B cell (primary cell): ENCODE measurements at regions of chr9 and their contacts with region 1.

Region 1: GRCh38 chr9:83691492-83691891 is 16.3 kb downstream of the UBQLN1 start:
- DNase-seq: no peak
- ATAC-seq: no peak
- H3K4me3 ChIP-seq: no peak overlapping the region
- H3K4me3 Mint-ChIP-seq: no peak overlapping the region
- H3K27ac ChIP-seq: no peak overlapping the region
- H3K27ac Mint-ChIP-seq: no peak overlapping the region
- H3K4me1 ChIP-seq: peaks cover 19 to 45% of the 10 kb centered on the region in 2 donors
- H3K4me1 Mint-ChIP-seq: peaks cover 78% of the 10 kb centered on the region
- H3K27me3 ChIP-seq: no peaks in the 10 kb centered on the region
- H3K27me3 Mint-ChIP-seq: no peaks in the 10 kb centered on the region
- CTCF ChIP-seq: no peak

Region 2: GRCh38 chr9:83656032-83656680 is 35.3 kb before region 1 on chr9:
- CTCF ChIA-PET with region 1: no interaction called
- POLR2A ChIA-PET with region 1: no interaction called
- intact Hi-C with region 1: loop called (anchors 5 kb)
- DNase-seq: no peak
- ATAC-seq: no peak
- H3K4me3 ChIP-seq: no peak overlapping the region
- H3K4me3 Mint-ChIP-seq: no peak overlapping the region
- H3K27ac ChIP-seq: no peak overlapping the region
- H3K27ac Mint-ChIP-seq: peak overlapping the region; percentile 8
- H3K4me1 ChIP-seq: no peaks in the 10 kb centered on the region
- H3K4me1 Mint-ChIP-seq: no peaks in the 10 kb centered on the region
- H3K27me3 ChIP-seq: no peaks in the 10 kb centered on the region
- H3K27me3 Mint-ChIP-seq: no peaks in the 10 kb centered on the region
- CTCF ChIP-seq: no peak